Dendritic cell treated with granulocyte-macrophage colony-stimulating factor and Interleukin-4, amounts not matched to agents 40 ng/mL and 50 ng/mL, for 4 days (primary cell): ENCODE measurements at regions of chr5 and their contacts with region 1.

Region 1: GRCh38 chr5:65779643-65780042 is 57.6 kb downstream of the NLN start:
- H3K4me3 Mint-ChIP-seq: no peak overlapping the region
- H3K27ac Mint-ChIP-seq: no peak overlapping the region
- H3K4me1 Mint-ChIP-seq: no peaks in the 10 kb centered on the region
- H3K27me3 Mint-ChIP-seq: no peaks in the 10 kb centered on the region

Region 2: DNA sequence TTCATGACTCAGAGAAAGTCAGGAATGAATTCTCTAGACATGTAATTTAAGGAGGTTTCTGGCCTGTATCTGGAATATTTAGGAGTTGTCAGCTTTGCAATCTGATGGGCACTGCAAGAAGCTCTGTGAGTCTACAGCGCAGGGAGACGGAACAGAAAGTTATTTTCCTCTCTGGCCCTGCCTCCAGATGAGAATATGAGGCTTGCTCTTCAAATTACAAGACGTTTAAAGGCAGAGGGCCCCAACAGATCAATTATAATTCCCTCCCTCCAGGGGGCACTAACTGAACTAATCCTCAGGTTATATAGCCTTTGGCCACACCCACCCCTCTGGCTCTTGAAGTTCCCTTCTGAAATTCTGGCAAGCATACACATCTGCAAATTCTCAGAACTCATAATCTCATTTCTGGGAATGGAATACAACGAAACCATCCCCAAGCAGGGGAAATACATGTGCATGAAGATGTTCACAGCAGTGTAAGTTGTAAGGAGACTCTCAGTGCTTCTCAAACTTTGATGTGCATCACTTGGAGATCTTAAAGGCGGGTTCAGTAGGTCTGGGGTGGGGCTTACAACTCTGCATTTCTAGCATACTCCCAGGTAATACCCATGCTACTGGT is 703.3 kb before region 1 on chr5:
- intact Hi-C with region 1: no loop called
- H3K4me3 Mint-ChIP-seq: no peak overlapping the region
- H3K27ac Mint-ChIP-seq: peak overlapping the region; percentile 21
- H3K4me1 Mint-ChIP-seq: peaks cover 54% of the 10 kb centered on the region
- H3K27me3 Mint-ChIP-seq: peaks cover 19% of the 10 kb centered on the region

Region 3: DNA sequence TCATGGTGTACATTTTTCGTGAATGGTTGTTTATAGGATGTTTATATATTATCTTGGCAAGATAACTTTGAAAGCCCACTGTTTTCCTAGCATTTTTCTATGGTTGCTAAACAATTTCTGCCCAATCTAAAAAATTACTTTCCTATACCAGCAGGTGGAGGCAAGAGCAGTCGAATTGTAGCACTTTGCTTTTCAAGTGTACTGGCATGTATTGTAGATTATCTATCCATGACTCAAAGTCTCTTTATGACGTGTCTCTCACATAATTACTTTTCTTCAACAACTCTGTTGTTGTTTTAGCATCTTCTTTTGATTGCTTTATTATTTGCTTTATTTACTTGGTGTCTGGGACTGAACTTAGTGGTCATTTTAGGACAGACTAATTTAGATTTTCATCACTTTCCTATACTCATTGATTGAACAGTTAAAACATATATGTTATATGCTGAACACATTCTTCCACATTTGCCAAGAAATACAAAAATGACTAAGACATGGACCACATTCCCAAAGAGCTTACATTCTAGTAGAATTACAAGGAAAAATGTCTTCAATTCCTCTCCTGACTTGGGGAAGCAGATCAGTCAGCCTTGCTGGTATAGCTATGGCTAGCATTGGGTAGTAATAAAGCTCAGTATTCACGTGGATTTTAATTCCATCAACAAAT is 36.9 kb before region 1 on chr5:
- intact Hi-C with region 1: loop called (anchors 5 kb)
- H3K4me3 Mint-ChIP-seq: no peak overlapping the region
- H3K27ac Mint-ChIP-seq: no peak overlapping the region
- H3K4me1 Mint-ChIP-seq: peaks cover 34% of the 10 kb centered on the region
- H3K27me3 Mint-ChIP-seq: no peaks in the 10 kb centered on the region

Region 4: DNA sequence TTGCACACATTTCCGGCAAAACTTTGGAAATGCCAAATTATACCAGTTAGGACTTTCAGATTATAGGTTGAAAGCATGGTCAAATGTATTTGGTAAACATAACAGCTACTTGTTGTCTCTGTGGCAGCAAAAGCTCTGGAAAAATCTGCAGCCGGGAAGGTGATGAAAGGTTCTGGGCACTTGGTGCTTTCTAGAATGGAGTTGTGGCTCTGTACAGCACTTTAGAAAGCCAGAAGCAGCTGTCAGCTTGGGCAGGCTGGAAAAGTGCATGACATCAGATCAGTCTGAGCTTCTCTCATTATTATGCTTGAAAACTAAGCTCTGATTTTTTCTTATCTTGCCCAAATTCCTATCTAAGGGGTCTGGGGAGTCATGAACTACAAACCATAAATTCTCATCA is 698.0 kb after region 1 on chr5:
- intact Hi-C with region 1: no loop called
- H3K4me3 Mint-ChIP-seq: no peak overlapping the region
- H3K27ac Mint-ChIP-seq: no peak overlapping the region
- H3K4me1 Mint-ChIP-seq: no peaks in the 10 kb centered on the region
- H3K27me3 Mint-ChIP-seq: no peaks in the 10 kb centered on the region